Esophagus muscularis mucosa (tissue), 4 donors: ENCODE measurements at regions of chr4 and their contacts with region 1.

Region 1: DNA sequence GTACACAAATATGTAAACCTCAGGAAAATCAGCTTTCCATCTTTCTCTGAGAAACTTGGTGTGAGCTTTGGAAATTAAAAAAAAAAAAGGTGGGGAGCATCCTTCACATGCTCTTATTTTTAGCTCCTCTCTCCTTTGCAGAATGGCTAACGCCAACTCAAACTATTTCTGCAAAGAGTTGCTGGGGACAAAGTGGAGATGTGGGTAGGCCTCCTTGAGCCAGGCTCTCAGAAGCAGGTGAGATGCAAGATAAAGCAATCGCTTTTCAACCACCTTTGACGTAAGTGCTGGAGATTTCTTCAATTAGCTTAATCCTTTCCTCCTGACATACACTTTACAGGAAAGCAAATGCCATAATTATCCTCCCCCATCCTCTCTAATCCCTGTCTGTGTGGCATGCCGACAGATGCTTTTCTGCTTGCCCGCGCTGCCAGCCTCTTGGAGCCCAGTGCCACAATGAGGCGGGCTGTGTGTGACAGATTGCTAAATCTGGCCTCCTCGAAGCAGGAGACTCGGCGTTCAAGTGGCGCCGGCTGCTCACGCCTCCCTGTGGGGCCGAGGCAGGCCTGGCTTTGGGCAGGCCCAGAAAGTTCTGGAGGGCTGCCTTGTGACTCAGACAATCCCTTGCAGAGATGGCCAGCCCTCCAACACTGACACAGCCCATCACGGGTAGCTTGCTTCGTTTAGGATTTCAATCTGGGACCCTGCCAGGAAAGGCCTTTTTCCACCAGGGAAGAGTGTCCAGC is 64.9 kb upstream of the SOD3 start:
- DNase-seq: no peak
- H3K4me3 ChIP-seq: no peak overlapping the region
- H3K27ac ChIP-seq: peak overlapping the region; percentile 46 to 76 (median 67)
- H3K4me1 ChIP-seq: peaks cover 8 to 44% (median 43%) of the 10 kb centered on the region in 4 donors
- H3K27me3 ChIP-seq: no peaks in the 10 kb centered on the region
- CTCF ChIP-seq: no peak
- EP300 ChIP-seq: peak; percentile 1
- POLR2A ChIP-seq: no peak

Region 2: GRCh38 chr4:24584175-24584850 is 146.1 kb before region 1 on chr4 and contains the start of gene DHX15:
- intact Hi-C with region 1: loop called (anchors 5 kb)
- DNase-seq: peak; percentile 99
- H3K4me3 ChIP-seq: peak within 1 kb of the TSS; percentile 78 to 99 (median 97)
- H3K27ac ChIP-seq: peak within 1 kb of the TSS; percentile 96 to 100 (median 98)
- H3K4me1 ChIP-seq: peaks cover 25 to 43% (median 41%) of the 10 kb centered on the region in 4 donors
- H3K27me3 ChIP-seq: no peaks in the 10 kb centered on the region
- CTCF ChIP-seq: no peak
- EP300 ChIP-seq: no peak
- POLR2A ChIP-seq: peak; percentile 61
- total RNA-seq, gene DHX15: 86.8 to 113 (median 94.4) TPM

Region 3: DNA sequence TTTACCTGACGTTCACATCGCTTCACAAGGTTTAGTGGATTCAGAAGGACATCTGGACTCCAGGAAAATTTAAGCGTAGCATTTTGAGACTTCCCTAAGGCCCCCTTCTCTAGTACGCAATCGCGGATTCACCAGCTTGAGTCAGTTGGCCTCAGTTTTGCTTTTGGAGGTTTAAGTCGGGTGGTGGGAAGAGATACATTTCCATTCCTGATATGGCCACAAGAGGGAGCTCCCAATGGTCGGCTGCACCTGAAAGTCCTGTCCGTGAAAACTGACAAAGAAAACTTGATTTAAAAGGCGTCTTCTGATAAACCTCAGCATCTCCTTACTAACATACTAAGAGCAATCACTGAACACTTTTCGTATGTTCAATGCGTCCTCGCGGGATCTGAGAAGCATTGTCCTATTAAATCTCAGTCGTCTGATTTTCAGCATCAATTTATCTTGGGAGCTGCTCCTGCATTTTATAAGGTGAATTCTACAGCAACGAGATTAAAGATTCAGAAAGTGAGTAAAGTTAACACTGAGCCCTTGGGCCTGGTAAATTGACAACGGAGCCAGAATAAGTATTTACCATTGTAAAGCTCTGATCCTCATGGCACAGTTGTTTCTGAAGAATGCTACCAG is 249.7 kb after region 1 on chr4:
- intact Hi-C with region 1: no loop called
- DNase-seq: no peak
- H3K4me3 ChIP-seq: peak overlapping the region; percentile 28 to 40 (median 34)
- H3K27ac ChIP-seq: peak overlapping the region; percentile 50 to 74 (median 64)
- H3K4me1 ChIP-seq: peaks cover 23 to 41% (median 39%) of the 10 kb centered on the region in 4 donors
- H3K27me3 ChIP-seq: no peaks in the 10 kb centered on the region
- CTCF ChIP-seq: peak; percentile 83 to 93 (median 88)
- EP300 ChIP-seq: no peak
- POLR2A ChIP-seq: no peak